Heart left ventricle (tissue), 16 donors: ENCODE measurements at regions of chr17 and their contacts with region 1.

Region 1: DNA sequence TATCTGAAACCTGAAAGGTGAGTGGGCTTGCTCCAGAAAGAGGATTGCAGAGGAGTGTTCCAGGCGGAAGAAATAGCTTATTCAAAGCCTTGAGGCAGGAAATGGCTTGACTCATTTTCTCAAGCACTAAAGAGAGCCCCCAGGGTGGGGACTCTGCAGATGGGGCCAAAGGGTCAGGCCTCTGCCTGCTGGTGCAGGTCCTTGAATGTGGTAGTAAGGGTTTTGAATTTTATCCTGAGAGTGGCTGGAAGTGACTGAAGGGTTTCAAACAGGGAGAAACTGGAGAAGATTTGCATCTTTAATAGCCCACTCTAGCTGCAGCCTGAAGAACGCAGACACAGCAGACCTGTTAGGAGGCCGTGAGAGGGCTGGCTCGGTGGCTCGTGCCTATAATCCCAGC is 144.4 kb downstream of the CCT6B start:
- DNase-seq: no peak
- ATAC-seq: no peak
- H3K4me3 ChIP-seq: no peak overlapping the region
- H3K27ac ChIP-seq: no peak overlapping the region
- H3K4me1 ChIP-seq: no peaks in the 10 kb centered on the region
- H3K27me3 ChIP-seq: peaks cover 0 to 7% (median 0%) of the 10 kb centered on the region in 9 donors
- CTCF ChIP-seq: no peak
- POLR2A ChIP-seq: no peak

Region 2: DNA sequence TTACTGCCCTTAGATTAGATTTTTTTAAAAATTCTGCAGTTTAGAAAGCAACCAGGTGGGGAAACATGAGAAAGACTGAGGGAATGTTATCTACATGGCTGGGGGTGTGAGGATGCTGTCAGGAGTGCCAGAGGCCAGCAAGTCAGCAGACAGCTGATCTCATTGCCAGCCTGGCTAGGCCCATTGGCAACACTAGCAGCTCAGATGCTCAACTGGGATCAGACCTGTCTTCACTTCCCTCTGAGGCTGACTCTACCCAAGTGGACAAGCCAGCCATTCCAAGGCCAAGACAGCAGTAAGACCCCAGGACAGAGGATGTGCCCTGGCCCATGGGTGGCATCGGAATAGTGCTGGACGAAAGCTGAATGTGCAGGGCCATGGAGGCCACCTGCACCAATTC is 141.2 kb before region 1 on chr17:
- intact Hi-C with region 1: no loop called
- DNase-seq: no peak
- ATAC-seq: no peak
- H3K4me3 ChIP-seq: no peak overlapping the region
- H3K27ac ChIP-seq: no peak overlapping the region
- H3K4me1 ChIP-seq: no peaks in the 10 kb centered on the region
- H3K27me3 ChIP-seq: peaks cover 0 to 3% (median 0%) of the 10 kb centered on the region in 9 donors
- CTCF ChIP-seq: no peak
- POLR2A ChIP-seq: no peak

Region 3: DNA sequence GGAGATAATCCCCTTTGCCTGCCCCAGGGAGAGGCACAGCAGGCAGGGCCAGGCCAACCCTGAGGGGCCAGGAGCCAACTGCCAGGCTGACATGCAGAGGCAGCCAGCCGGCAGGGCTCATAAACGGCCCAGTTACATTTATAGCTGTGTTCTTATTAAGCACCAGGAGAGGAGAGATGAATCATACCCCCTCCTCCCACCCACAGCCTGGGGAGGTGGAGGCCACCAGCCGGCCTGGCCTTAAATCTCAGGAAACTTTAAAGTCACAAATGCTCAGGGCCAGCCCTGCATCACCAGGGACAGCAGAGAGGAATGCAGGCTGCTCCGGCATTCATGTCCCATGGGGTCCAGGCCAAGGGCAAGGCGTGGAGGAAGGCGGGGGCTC is 60.2 kb before region 1 on chr17:
- intact Hi-C with region 1: loop called in 1 of 10 experiments (anchors 10 kb)
- DNase-seq: peak in 3 of 5 donors; percentile 15 to 37 (median 36)
- ATAC-seq: peak in 3 of 4 donors; percentile 67 to 90 (median 88)
- H3K4me3 ChIP-seq: no peak overlapping the region
- H3K27ac ChIP-seq: no peak overlapping the region
- H3K4me1 ChIP-seq: no peaks in the 10 kb centered on the region
- H3K27me3 ChIP-seq: peaks cover 0 to 17% (median 0%) of the 10 kb centered on the region in 9 donors
- CTCF ChIP-seq: no peak
- POLR2A ChIP-seq: no peak